ENCODE measurements at regions of chr15 and their contacts with region 1.

Region 1: GRCh38 chr15:50380089-50380488 is 25.1 kb upstream of the GABPB1 start:
- DNase-seq: no peak
- H3K4me3 ChIP-seq: no peak overlapping the region
- H3K27ac ChIP-seq: no peak overlapping the region
- H3K27me3 ChIP-seq: no peaks in the 10 kb centered on the region
- CTCF ChIP-seq: no peak

Region 2: DNA sequence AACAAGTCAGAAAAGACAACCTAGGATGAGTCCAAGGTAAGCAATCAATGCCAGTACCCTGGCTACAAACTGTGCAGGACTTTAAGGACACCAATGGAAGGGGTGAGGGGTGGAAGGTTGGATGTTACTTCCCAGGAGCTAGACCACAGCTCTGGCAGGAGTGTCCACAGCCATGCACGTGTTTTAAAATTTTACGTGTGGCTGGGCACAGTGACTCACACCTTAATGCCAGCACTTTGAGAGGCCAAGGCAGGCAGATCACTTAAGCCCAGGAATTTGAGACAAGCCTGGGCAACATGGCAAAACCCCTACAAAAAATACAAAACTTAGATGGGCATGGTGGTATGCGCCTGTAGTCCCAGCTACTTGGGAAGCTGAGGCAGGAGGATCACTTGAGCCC is 99.8 kb before region 1 on chr15:
- CTCF ChIA-PET with region 1: no interaction called
- POLR2A ChIA-PET with region 1: no interaction called
- DNase-seq: no peak
- H3K4me3 ChIP-seq: no peak overlapping the region
- H3K27ac ChIP-seq: no peak overlapping the region
- H3K27me3 ChIP-seq: no peaks in the 10 kb centered on the region
- CTCF ChIP-seq: no peak

Region 3: GRCh38 chr15:50889589-50889988 is 509.5 kb after region 1 on chr15:
- CTCF ChIA-PET with region 1: no interaction called
- POLR2A ChIA-PET with region 1: interaction called, 14 read pairs
- DNase-seq: no peak
- H3K4me3 ChIP-seq: no peak overlapping the region
- H3K27ac ChIP-seq: no peak overlapping the region
- H3K27me3 ChIP-seq: no peaks in the 10 kb centered on the region
- CTCF ChIP-seq: no peak

Measured in AG04450 (cell line).